ENCODE measurements at regions of chr5 and their contacts with region 1.

Region 1: DNA sequence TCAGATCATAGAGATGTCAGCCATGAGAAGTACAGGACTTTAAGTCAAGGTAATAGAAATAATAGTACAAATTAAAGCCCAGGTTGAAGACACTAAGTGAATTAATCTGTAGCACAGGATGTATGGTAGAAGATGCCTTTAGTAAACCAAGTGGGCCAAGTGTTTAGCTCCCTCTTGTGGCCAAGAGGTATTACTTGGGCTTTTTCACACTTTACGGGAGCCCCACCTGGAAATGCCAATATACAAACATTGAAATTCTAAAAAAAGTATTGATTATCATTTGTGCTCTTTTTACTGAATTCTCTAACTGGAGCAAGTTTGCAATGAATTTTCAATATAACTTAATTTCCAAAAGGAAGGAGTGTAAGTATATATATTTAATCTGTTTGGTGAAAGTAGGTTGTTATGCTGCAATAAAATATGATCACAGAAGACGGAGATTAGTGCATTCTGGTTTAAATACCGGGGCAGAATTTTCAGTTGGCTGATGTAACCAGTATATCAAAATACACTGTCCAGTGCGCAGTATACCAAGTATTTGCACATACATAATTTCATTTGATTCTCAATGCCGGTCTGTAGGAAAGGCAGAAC is 84.7 kb downstream of the PARP8 start:
- H3K4me3 ChIP-seq: no peak overlapping the region
- H3K27ac ChIP-seq: no peak overlapping the region
- H3K4me1 ChIP-seq: no peaks in the 10 kb centered on the region
- CTCF ChIP-seq: peak; percentile 53; the same call in 1 of the 2 replicates

Region 2: DNA sequence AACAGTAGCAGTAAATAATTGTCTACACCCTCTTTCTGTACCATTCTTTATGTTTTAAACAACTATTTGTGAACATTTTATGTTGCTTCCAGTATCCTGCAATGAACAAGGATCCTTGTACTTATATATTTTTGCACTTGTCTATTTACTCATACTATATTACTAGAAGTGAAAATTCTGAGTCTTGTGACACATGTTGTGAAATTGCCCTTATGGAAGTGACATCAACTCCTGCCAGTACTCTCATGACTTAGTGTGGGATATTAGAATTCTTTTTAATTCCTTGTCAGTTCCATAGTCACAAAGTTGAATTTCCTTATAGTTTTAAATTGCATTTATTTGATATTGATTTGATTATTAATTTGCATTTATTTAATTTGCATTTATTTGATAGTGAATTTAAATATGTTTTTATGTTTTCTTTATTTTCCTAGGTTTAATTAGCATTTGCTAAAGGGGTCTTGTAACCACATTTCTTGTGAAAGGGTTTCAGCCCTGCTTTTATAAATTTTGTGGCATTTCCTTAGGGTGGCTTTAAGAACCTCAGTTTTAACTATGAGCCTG is 57.1 kb before region 1 on chr5:
- CTCF ChIA-PET with region 1: no interaction called
- POLR2A ChIA-PET with region 1: no interaction called
- H3K4me3 ChIP-seq: no peak overlapping the region
- H3K27ac ChIP-seq: no peak overlapping the region
- H3K4me1 ChIP-seq: peaks cover 8% of the 10 kb centered on the region
- CTCF ChIP-seq: no peak

Region 3: DNA sequence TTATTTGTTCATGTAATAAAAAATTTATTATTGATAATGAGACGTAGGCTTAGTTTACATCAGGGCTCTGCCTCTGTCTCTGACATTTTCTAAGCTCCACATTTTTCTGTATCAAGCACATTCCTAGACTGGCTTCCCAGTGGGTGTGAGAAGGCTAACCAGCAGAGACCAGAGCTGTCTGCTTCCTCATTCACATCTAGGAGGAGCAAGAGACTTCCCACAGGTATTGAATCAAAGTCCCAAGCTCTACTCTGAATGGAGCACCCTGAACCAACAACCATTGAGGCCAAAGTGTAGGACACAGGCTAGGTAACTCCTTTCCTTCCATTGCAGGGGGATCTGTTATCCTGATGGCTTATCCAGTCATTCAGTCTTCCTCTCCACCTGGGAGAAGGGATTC is 12.3 kb before region 1 on chr5:
- CTCF ChIA-PET with region 1: interaction called, 13 read pairs
- POLR2A ChIA-PET with region 1: no interaction called
- H3K4me3 ChIP-seq: no peak overlapping the region
- H3K27ac ChIP-seq: no peak overlapping the region
- H3K4me1 ChIP-seq: peaks cover 20% of the 10 kb centered on the region
- CTCF ChIP-seq: no peak